ENCODE measurements at regions of chr2 and their contacts with region 1.

Region 1: GRCh38 chr2:27050281-27050995 is 1.0 kb upstream of the AGBL5 start:
- DNase-seq: peak; percentile 73 to 99 (median 92)
- ATAC-seq: peak; percentile 60 to 66
- H3K4me3 Mint-ChIP-seq: peak overlapping the region; percentile 86 to 99 (median 97)
- H3K27ac Mint-ChIP-seq: peak overlapping the region; percentile 97 to 100 (median 99)
- H3K4me1 Mint-ChIP-seq: peaks cover 22 to 37% (median 29%) of the 10 kb centered on the region in 4 donors
- H3K27me3 Mint-ChIP-seq: peaks cover 0 to 12% (median 0%) of the 10 kb centered on the region in 5 donors

Region 2: DNA sequence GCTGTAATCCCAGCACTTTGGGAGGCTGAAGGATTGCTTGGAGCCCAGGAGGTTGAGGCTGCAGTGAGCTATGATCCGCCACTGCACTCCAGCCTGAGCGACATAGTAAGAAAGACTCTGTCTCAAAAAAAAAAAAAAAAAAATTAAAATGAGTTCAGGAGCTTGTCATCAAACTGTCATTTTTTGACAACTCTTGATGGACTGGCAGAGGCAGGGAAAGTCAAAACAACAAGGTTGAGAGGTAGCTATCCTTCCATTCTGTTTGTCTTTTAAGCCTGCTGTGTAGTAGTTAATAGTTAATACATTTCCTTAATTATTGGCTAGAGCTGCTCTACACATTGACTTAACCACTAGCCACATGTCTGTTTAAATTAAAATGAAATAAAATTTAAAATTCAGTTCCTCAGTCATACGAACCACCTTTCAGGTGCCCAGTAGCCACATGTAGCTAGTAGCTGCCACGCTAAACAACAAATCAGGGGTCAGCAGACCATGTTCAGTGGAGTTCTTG is 179.8 kb before region 1 on chr2:
- POLR2A ChIA-PET with region 1: interaction called, 10 read pairs
- DNase-seq: no peak
- ATAC-seq: no peak
- H3K4me3 Mint-ChIP-seq: no peak overlapping the region
- H3K27ac Mint-ChIP-seq: no peak overlapping the region
- H3K4me1 Mint-ChIP-seq: no peaks in the 10 kb centered on the region
- H3K27me3 Mint-ChIP-seq: peaks cover 6 to 31% (median 19%) of the 10 kb centered on the region in 5 donors

Region 3: GRCh38 chr2:27032495-27033252 is 17.8 kb before region 1 on chr2 and contains the start of gene TMEM214:
- POLR2A ChIA-PET with region 1: interaction called, 25 read pairs
- DNase-seq: peak; percentile 53 to 86 (median 66)
- ATAC-seq: peak; percentile 94 to 97
- H3K4me3 Mint-ChIP-seq: peak within 1 kb of the TSS; percentile 89 to 95 (median 94)
- H3K27ac Mint-ChIP-seq: peak within 1 kb of the TSS; percentile 79 to 96 (median 92)
- H3K4me1 Mint-ChIP-seq: peaks cover 15 to 52% (median 43%) of the 10 kb centered on the region in 4 donors
- H3K27me3 Mint-ChIP-seq: no peaks in the 10 kb centered on the region
- polyA plus RNA-seq, gene TMEM214: 19.4 to 25.8 (median 20.8) TPM

Region 4: DNA sequence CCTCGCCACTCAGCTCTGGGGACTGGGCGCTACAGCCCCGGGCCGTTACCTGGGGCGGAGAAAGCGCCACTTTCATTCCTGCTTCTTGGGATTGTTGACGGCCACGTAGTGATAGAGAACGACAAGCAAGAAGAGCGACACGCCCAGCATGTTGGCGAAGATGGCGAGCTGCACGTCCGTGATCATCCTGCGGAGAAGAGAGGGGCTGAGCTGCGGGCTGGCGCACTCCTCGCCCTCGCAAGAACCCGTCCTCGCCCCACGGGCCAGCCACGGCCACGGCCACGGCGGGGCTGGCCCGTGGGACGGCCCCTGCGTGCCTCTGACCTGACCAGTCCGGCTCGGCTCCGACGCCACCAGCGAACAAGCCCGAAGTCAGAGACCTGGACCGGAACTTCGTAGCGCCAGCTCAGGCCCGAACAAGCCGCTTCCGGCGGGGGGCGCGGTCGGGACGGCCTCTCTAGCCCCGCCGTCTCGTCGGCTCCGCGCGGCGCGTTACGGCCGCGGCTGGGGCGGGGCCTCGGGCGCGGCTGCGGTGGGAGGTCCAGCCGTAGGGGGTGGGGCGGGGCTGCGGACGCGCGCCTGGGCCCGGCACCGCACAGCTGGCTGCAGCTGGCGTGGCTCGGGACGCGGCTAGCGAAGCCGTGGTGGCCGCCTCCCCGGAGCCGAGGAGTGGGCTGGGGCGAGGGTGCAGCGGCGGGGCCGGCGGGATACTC is 21.0 kb after region 1 on chr2 and contains the start of gene OST4:
- POLR2A ChIA-PET with region 1: interaction called, 270 read pairs
- DNase-seq: peak; percentile 80 to 90 (median 88)
- ATAC-seq: peak; percentile 87 to 91
- H3K4me3 Mint-ChIP-seq: peak within 1 kb of the TSS; percentile 93 to 98 (median 98)
- H3K27ac Mint-ChIP-seq: peak within 1 kb of the TSS; percentile 94 to 99 (median 97)
- H3K4me1 Mint-ChIP-seq: peaks cover 45 to 83% (median 76%) of the 10 kb centered on the region in 4 donors
- H3K27me3 Mint-ChIP-seq: no peaks in the 10 kb centered on the region
- polyA plus RNA-seq, gene OST4: 827 to 916 (median 901) TPM

Region 5: GRCh38 chr2:27086090-27086723 is 35.8 kb after region 1 on chr2:
- POLR2A ChIA-PET with region 1: interaction called, 129 read pairs
- DNase-seq: peak; percentile 95 to 99 (median 99)
- ATAC-seq: peak; percentile 90 to 91
- H3K4me3 Mint-ChIP-seq: peak overlapping the region; percentile 79 to 89 (median 85)
- H3K27ac Mint-ChIP-seq: peak overlapping the region in 8 of 10 donors; percentile 70 to 93 (median 86)
- H3K4me1 Mint-ChIP-seq: peaks cover 12 to 30% (median 24%) of the 10 kb centered on the region in 4 donors
- H3K27me3 Mint-ChIP-seq: no peaks in the 10 kb centered on the region

Region 6: DNA sequence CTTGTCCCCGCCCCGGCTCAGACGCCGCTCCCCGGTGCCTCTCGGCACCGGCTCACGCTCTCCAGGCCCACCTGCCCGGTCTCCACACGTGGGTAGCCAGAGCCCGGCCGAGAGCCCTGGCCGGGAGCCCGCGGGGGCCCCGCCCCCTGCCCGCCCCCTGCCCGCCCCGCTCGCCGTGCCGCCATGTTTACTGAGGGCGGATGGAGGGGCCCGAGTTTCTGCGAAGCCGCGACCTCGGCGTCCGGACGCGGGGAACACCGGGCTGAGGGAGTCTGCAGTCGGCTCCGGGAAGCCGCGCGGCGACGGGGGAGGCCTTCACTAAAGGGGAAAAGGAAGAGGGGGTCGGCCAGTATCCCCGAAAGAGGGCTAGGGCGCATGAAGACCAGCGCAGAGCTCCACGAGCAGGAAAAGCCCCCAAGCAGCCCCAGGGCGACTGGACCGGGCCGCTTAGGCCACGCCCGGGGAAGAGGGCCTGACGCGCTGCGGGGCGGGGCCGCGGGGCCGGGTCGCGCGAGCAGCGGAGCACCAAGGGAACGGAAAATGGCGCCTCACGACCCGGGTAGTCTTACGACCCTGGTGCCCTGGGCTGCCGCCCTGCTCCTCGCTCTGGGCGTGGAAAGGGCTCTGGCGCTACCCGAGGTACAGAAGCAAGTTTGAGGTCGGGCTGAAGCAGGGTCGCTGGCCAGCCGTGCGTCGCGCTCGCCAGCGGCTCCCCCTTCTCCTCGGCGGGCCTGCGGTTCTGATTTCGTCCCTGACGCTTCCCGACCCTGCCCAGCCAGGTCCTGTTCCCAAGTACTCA is 161.6 kb after region 1 on chr2 and contains the starts of genes ATRAID and SLC5A6:
- POLR2A ChIA-PET with region 1: interaction called, 16 read pairs
- DNase-seq: peak; percentile 84 to 94 (median 90)
- ATAC-seq: peak; percentile 84 to 89
- H3K4me3 Mint-ChIP-seq: peak within 1 kb of the TSS; percentile 91 to 100 (median 100)
- H3K27ac Mint-ChIP-seq: peak within 1 kb of the TSS; percentile 99 to 100 (median 100)
- H3K4me1 Mint-ChIP-seq: peaks cover 25 to 47% (median 40%) of the 10 kb centered on the region in 4 donors
- H3K27me3 Mint-ChIP-seq: no peaks in the 10 kb centered on the region
- polyA plus RNA-seq, gene ATRAID: 299 to 388 (median 360) TPM
- polyA plus RNA-seq, gene SLC5A6: 14.3 to 17.8 (median 17.2) TPM